ENCODE measurements at regions of chr13 and their contacts with region 1.

Region 1: DNA sequence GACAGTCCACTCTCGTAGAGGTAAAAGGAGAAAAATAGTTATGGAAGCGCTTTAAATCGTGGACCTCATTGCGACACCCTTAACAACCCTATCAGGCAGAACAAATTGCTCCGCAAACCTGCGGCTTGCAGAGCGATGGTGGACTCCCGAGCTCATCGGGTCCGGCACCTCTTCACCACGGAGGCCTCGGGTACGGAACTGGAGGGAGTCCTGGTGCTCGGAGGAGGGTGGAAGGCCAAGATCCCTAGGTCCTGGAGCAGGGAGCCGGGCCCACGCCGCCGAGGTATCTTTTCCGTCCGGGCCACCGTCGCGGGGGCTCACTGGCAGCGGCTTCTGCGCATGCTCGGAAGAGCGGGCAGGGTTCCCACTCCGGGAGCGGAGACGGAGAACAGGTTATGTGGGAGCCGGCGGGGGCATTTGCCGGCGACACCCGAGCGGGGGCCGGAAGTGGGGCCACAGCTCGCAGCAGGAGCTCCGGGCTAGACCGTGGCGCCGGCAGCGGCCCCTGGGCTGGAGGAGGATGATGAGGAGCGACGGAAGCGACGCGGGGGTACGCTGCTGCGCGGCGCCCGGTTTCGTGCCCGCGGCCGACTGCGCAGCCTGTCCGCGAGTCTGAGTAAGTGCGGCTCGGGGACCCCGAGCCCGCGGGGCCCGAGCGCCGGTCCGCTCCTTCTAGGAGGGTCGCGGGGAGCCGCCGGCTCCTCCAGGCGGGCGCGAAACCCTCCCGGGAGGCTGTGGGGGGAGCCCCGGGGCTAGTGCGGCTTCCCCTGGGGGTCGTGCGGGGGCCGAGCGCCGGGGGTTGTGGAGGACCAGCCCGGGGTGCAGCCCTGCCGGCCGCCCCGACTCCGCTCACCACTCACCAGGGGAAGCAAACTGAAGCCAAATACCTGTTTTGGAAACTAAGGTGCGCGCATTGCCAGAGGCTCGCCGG is at the start of gene ABHD13:
- DNase-seq: peak; percentile 88 to 98 (median 93)
- ATAC-seq: peak; percentile 81
- H3K4me3 ChIP-seq: peak within 1 kb of the TSS; percentile 98
- H3K4me3 Mint-ChIP-seq: peak within 1 kb of the TSS; percentile 92 to 98 (median 96)
- H3K27ac ChIP-seq: peak within 1 kb of the TSS; percentile 79
- H3K27ac Mint-ChIP-seq: peak within 1 kb of the TSS; percentile 95 to 98 (median 96)
- H3K4me1 ChIP-seq: peaks cover 34 to 50% of the 10 kb centered on the region in 2 donors
- H3K4me1 Mint-ChIP-seq: peaks cover 16 to 77% (median 72%) of the 10 kb centered on the region in 7 donors
- H3K27me3 ChIP-seq: no peaks in the 10 kb centered on the region
- H3K27me3 Mint-ChIP-seq: peaks cover 0 to 4% (median 0%) of the 10 kb centered on the region in 5 donors
- total RNA-seq, gene ABHD13: 10.3 to 19.8 (median 12.7) TPM

Region 2: GRCh38 chr13:106867249-106867648 is 1351.1 kb before region 1 on chr13:
- CTCF ChIA-PET with region 1: no interaction called
- POLR2A ChIA-PET with region 1: no interaction called
- intact Hi-C with region 1: no loop called
- DNase-seq: no peak
- ATAC-seq: no peak
- H3K4me3 ChIP-seq: no peak overlapping the region
- H3K4me3 Mint-ChIP-seq: no peak overlapping the region
- H3K27ac ChIP-seq: no peak overlapping the region
- H3K27ac Mint-ChIP-seq: no peak overlapping the region
- H3K4me1 ChIP-seq: no peaks in the 10 kb centered on the region
- H3K4me1 Mint-ChIP-seq: peaks cover 0 to 6% (median 0%) of the 10 kb centered on the region in 7 donors
- H3K27me3 ChIP-seq: no peaks in the 10 kb centered on the region
- H3K27me3 Mint-ChIP-seq: peaks cover 0 to 28% (median 22%) of the 10 kb centered on the region in 5 donors

Region 3: DNA sequence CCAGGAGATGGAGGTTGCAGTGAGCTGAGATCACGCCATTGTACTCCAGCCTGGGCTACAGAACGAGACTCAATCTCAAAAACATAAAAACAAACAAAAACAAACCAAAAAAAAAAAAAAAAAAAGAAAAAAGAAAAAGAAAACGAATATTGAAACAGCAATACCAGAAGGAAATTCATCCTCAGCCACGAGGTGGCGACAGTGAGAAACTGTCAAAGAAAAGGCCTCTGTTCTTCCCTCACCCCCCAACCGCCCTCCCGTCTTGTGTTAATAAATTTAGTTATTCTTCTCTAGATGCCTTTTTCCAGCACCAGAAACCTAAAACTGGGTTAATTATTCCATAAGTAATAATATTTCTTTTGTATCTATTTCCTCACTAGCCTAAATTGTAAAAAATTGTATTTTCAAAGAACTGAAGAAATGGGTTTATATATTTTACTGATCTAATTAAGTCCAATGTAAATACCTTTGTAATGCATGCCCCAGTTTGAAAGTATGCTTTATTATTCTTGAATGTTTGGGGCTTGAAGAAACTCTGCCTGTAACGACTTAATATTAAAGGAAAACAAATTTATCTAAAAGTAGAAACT is 41.5 kb before region 1 on chr13:
- CTCF ChIA-PET with region 1: no interaction called
- POLR2A ChIA-PET with region 1: no interaction called
- intact Hi-C with region 1: loop called (anchors 1 to 2 kb)
- DNase-seq: peak in 8 of 9 donors; percentile 18 to 51 (median 36)
- ATAC-seq: peak; percentile 37
- H3K4me3 ChIP-seq: no peak overlapping the region
- H3K4me3 Mint-ChIP-seq: no peak overlapping the region
- H3K27ac ChIP-seq: no peak overlapping the region
- H3K27ac Mint-ChIP-seq: no peak overlapping the region
- H3K4me1 ChIP-seq: no peaks in the 10 kb centered on the region
- H3K4me1 Mint-ChIP-seq: no peaks in the 10 kb centered on the region
- H3K27me3 ChIP-seq: no peaks in the 10 kb centered on the region
- H3K27me3 Mint-ChIP-seq: peaks cover 0 to 12% (median 2%) of the 10 kb centered on the region in 5 donors

Region 4: DNA sequence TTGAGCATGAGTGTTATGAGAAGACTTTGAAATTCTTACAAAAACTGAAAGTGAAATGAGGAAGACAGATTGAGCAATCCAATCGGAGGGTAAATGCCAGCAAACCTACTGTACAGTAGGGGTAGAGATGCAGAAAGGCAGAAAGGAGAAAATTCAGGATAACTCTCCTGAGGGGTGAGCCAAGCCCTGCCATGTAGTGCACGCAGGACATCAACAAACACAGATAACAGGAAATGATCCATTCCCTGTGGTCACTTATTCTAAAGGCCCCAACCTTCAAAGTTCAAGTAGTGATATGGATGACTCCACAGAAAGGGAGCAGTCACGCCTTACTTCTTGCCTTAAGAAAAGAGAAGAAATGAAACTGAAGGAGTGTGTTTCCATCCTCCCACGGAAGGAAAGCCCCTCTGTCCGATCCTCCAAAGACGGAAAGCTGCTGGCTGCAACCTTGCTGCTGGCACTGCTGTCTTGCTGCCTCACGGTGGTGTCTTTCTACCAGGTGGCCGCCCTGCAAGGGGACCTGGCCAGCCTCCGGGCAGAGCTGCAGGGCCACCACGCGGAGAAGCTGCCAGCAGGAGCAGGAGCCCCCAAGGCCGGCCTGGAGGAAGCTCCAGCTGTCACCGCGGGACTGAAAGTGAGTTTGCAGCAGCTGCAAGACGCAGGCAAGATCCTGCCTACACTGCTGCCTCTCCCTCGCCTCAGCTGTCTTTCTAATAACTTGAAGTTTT is 51.5 kb after region 1 on chr13 and contains the start of gene TNFSF13B:
- CTCF ChIA-PET with region 1: no interaction called
- POLR2A ChIA-PET with region 1: interaction called, 12 read pairs
- intact Hi-C with region 1: loop called (anchors 1 to 2 kb)
- DNase-seq: peak in 8 of 9 donors; percentile 17 to 62 (median 26)
- ATAC-seq: peak; percentile 74
- H3K4me3 ChIP-seq: peak within 1 kb of the TSS; percentile 65
- H3K4me3 Mint-ChIP-seq: peak within 1 kb of the TSS; percentile 83 to 98 (median 90)
- H3K27ac ChIP-seq: peak within 1 kb of the TSS; percentile 66
- H3K27ac Mint-ChIP-seq: peak within 1 kb of the TSS; percentile 83 to 97 (median 92)
- H3K4me1 ChIP-seq: peaks cover 0 to 7% of the 10 kb centered on the region in 2 donors
- H3K4me1 Mint-ChIP-seq: peaks cover 23 to 68% (median 52%) of the 10 kb centered on the region in 7 donors
- H3K27me3 ChIP-seq: no peaks in the 10 kb centered on the region
- H3K27me3 Mint-ChIP-seq: no peaks in the 10 kb centered on the region
- total RNA-seq, gene TNFSF13B: 3.0 to 26.8 (median 12.8) TPM

Region 5: GRCh38 chr13:108407495-108407894 is 189.2 kb after region 1 on chr13:
- CTCF ChIA-PET with region 1: no interaction called
- POLR2A ChIA-PET with region 1: interaction called, 3 read pairs
- intact Hi-C with region 1: loop called in 1 of 2 experiments (anchors 5 kb)
- DNase-seq: no peak
- ATAC-seq: no peak
- H3K4me3 ChIP-seq: no peak overlapping the region
- H3K4me3 Mint-ChIP-seq: peak overlapping the region in 2 of 10 donors; percentile 84 to 87
- H3K27ac ChIP-seq: peak overlapping the region; percentile 1
- H3K27ac Mint-ChIP-seq: peak overlapping the region in 8 of 9 donors; percentile 64 to 95 (median 82)
- H3K4me1 ChIP-seq: peaks cover 35% of the 10 kb centered on the region in 2 donors
- H3K4me1 Mint-ChIP-seq: peaks cover 13 to 70% (median 55%) of the 10 kb centered on the region in 7 donors
- H3K27me3 ChIP-seq: no peaks in the 10 kb centered on the region
- H3K27me3 Mint-ChIP-seq: peaks cover 0 to 2% (median 0%) of the 10 kb centered on the region in 5 donors

Region 6: DNA sequence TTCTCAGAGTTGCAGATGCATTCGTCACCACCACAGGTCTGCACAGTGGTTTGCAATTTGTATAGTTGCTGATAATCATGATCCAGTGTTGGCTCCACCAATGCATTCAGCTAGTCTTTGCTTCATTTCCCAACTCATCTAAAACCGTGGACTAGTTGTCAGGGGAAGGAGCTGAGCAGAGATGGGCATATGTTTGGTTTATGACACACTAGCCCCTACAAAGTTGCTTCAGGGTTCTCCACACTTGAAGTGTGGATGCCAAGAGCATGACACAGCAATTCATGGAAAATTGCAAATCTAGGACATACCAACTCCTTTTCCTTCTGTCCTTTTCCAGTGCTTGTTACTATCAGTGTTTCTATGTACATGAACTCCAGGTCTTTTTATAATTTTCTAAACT is 219.2 kb after region 1 on chr13:
- CTCF ChIA-PET with region 1: no interaction called
- POLR2A ChIA-PET with region 1: no interaction called
- intact Hi-C with region 1: no loop called
- DNase-seq: no peak
- ATAC-seq: no peak
- H3K4me3 ChIP-seq: no peak overlapping the region
- H3K4me3 Mint-ChIP-seq: no peak overlapping the region
- H3K27ac ChIP-seq: no peak overlapping the region
- H3K27ac Mint-ChIP-seq: no peak overlapping the region
- H3K4me1 ChIP-seq: no peaks in the 10 kb centered on the region
- H3K4me1 Mint-ChIP-seq: no peaks in the 10 kb centered on the region
- H3K27me3 ChIP-seq: no peaks in the 10 kb centered on the region
- H3K27me3 Mint-ChIP-seq: peaks cover 0 to 9% (median 5%) of the 10 kb centered on the region in 5 donors

Region 7: DNA sequence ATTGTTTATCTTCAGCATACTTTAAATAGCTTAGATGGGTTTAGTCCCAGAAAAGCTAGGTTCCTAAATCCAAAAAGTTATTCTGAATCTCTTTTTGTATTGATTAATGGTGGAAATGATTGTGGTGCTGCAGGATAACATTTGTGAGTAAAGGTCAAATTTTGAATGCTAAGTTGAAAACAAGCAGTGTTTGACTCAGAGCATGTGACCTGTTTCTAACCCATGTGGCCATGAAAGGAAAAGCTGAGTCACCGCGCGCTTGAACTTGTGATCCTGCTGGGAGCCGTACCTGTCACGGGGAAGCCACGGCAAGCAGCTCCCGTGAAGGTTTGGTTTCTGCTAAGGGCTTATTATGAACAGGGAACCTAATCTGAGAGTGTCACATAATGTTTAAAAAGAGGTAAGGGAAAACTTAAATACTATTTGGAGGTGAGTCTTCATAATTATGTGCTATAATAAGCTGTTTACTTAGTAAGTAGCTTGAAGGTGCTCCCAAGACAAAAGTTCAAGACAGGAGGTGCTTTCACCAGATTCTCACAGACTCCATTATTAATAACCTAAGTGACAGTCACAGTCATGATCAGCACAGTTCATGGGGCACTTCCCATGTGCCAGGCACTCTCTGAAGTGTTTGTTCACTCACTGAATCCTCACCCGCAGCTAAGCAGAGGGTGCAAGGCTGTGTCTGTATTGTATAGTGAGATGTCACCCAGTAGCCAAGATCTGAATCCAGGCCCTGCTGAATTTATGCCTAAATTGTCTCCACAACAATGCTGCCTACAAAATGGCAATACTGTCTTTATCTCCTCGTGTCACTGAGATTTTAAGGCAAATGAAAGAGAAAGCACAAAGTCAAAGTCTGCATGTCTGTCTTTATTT is 697.6 kb after region 1 on chr13:
- CTCF ChIA-PET with region 1: no interaction called
- POLR2A ChIA-PET with region 1: interaction called, 4 read pairs
- intact Hi-C with region 1: loop called (anchors 5 kb)
- DNase-seq: peak in 4 of 9 donors; percentile 6 to 77 (median 32)
- ATAC-seq: peak; percentile 68
- H3K4me3 ChIP-seq: no peak overlapping the region
- H3K4me3 Mint-ChIP-seq: peak overlapping the region in 9 of 10 donors; percentile 26 to 82 (median 62)
- H3K27ac ChIP-seq: no peak overlapping the region
- H3K27ac Mint-ChIP-seq: peak overlapping the region in 3 of 9 donors; percentile 22 to 96 (median 77)
- H3K4me1 ChIP-seq: peaks cover 0 to 6% of the 10 kb centered on the region in 2 donors
- H3K4me1 Mint-ChIP-seq: peaks cover 7 to 20% (median 17%) of the 10 kb centered on the region in 7 donors
- H3K27me3 ChIP-seq: no peaks in the 10 kb centered on the region
- H3K27me3 Mint-ChIP-seq: peaks cover 3 to 16% (median 9%) of the 10 kb centered on the region in 5 donors